Activated CD8-positive, alpha-beta T cell treated with anti-CD3 and anti-CD28 coated beads for 36 hours (primary cell): ENCODE measurements at regions of chr7 and their contacts with region 1.

Region 1: DNA sequence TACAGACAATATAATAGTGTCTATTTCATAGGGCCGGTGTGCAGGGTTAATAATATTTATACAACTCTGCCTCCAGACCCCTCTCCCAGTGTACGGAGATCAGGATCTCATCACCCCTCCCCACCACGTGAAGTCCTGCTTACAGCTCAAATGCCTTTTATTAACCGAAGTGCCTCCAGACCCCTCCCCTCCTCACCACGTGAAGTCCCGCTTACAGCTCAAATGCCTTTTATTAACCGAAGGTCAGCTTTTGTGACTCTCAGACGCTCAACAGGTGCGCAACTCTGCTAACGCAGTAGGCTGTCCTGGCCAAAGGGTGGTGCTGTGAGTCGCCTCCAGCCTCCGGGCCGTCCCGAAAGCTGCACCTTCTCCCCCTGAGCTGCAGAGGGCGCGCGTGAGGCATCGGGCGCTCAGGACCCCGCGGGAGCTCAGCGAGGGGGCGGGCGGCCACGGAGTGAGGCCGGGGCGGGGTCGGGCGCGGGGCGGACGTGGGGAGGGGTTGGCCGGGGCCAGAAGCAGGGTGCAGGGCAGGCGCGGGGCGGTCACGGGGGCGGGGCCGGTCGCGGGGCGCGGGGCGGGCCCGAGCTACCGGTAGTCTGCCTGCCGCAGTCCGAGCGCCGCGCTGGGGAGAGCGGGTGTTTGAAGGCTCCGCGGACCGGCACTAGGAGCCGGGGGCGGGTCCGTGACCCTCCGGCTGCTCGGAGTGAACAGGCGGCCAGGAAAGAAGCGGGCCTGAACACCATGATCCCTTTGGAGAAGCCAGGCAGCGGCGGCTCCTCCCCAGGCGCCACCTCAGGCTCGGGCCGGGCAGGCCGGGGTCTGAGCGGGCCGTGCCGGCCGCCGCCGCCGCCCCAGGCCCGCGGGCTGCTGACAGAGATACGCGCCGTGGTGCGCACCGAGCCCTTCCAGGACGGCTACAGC is at the start of gene STK17A:
- DNase-seq: peak; percentile 93
- ATAC-seq: peak; percentile 85
- H3K4me3 Mint-ChIP-seq: peak within 1 kb of the TSS; percentile 93
- H3K27ac Mint-ChIP-seq: peak within 1 kb of the TSS; percentile 93
- H3K4me1 Mint-ChIP-seq: peaks cover 15% of the 10 kb centered on the region
- H3K27me3 Mint-ChIP-seq: peaks cover 2% of the 10 kb centered on the region
- CTCF ChIP-seq: peak; percentile 98
- total RNA-seq, gene STK17A: 42.4 to 46.1 TPM

Region 2: GRCh38 chr7:43560742-43561360 is 21.9 kb before region 1 on chr7:
- CTCF ChIA-PET with region 1: interaction called, 11 read pairs
- POLR2A ChIA-PET with region 1: no interaction called
- intact Hi-C with region 1: no loop called
- DNase-seq: no peak
- ATAC-seq: no peak
- H3K4me3 Mint-ChIP-seq: no peak overlapping the region
- H3K27ac Mint-ChIP-seq: no peak overlapping the region
- H3K4me1 Mint-ChIP-seq: peaks cover 2% of the 10 kb centered on the region
- H3K27me3 Mint-ChIP-seq: peaks cover 7% of the 10 kb centered on the region
- CTCF ChIP-seq: no peak

Region 3: DNA sequence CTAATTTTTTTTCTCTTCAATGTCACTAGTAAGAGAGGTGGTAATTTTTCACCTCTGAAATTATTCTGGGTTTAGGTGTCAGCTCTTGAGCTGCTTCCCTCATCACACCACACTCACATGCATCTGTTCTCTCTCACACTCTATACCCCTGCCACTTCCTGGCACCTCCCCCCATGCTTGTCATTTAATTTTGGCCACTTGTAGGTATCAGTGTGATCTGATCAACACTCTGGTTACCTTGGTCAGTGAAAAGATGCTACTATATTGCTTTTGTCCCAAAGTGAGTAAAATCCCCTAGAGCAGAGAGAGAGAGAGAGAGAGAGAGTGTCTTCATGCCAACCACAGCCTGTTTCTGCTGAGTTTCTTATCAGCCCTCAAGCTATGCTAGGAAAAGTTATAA is 42.7 kb after region 1 on chr7:
- CTCF ChIA-PET with region 1: interaction called, 123 read pairs
- POLR2A ChIA-PET with region 1: interaction called, 21 read pairs
- intact Hi-C with region 1: loop called (anchors 5 kb)
- DNase-seq: peak; percentile 84
- ATAC-seq: peak; percentile 75
- H3K4me3 Mint-ChIP-seq: peak overlapping the region; percentile 17
- H3K27ac Mint-ChIP-seq: peak overlapping the region; percentile 80
- H3K4me1 Mint-ChIP-seq: peaks cover 90% of the 10 kb centered on the region
- H3K27me3 Mint-ChIP-seq: no peaks in the 10 kb centered on the region
- CTCF ChIP-seq: no peak

Region 4: DNA sequence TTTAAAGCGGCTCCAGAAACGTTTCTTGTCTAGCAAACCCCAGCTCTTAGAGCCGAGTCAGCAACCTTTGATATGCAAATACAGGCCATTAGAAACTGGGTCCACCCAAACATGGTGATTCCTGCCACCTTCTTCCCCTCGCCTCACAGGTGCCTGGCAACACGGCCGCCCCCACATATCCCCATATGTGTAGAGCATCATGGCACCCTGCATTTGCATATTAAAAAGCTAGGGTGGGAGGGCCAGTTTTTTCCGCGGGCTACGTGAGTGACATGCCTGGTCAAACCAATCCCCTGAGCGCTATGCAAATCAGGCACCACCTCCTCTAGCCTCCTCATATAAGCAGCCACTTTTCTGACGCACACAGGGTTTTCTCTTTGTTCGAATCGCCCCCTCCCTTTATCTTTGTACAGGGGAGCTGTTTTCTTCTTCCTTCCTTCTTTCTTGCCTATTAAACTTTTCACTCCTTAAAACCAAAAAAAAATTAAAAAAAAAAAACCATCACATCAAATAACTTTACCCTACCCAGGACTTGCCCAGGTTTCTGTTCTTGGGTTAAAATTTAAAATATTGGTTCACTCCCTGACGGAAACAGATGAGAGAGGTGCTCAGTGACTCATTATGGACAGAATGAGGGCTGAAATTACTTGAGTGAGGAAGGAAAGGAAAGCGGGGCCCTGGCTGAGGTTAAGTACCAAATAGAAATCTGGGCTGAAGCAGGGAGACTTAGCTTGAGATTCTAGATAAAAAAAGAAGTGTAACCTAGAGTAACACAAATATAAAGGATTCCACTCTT is 86.7 kb after region 1 on chr7:
- CTCF ChIA-PET with region 1: interaction called, 18 read pairs
- POLR2A ChIA-PET with region 1: interaction called, 4 read pairs
- intact Hi-C with region 1: no loop called
- DNase-seq: peak; percentile 95
- ATAC-seq: peak; percentile 85
- H3K4me3 Mint-ChIP-seq: peak overlapping the region; percentile 75
- H3K27ac Mint-ChIP-seq: peak overlapping the region; percentile 97
- H3K4me1 Mint-ChIP-seq: peaks cover 79% of the 10 kb centered on the region
- H3K27me3 Mint-ChIP-seq: no peaks in the 10 kb centered on the region
- CTCF ChIP-seq: no peak

Region 5: GRCh38 chr7:43700059-43700501 is 117.3 kb after region 1 on chr7:
- CTCF ChIA-PET with region 1: interaction called, 452 read pairs
- POLR2A ChIA-PET with region 1: interaction called, 63 read pairs
- intact Hi-C with region 1: loop called (anchors 1 kb)
- DNase-seq: no peak
- ATAC-seq: peak; percentile 50
- H3K4me3 Mint-ChIP-seq: no peak overlapping the region
- H3K27ac Mint-ChIP-seq: no peak overlapping the region
- H3K4me1 Mint-ChIP-seq: peaks cover 60% of the 10 kb centered on the region
- H3K27me3 Mint-ChIP-seq: no peaks in the 10 kb centered on the region
- CTCF ChIP-seq: peak; percentile 91

Region 6: GRCh38 chr7:43735802-43736541 is 153.2 kb after region 1 on chr7:
- CTCF ChIA-PET with region 1: interaction called, 52 read pairs
- POLR2A ChIA-PET with region 1: no interaction called
- intact Hi-C with region 1: no loop called
- DNase-seq: peak; percentile 80
- ATAC-seq: peak; percentile 96
- H3K4me3 Mint-ChIP-seq: no peak overlapping the region
- H3K27ac Mint-ChIP-seq: peak overlapping the region; percentile 65
- H3K4me1 Mint-ChIP-seq: peaks cover 14% of the 10 kb centered on the region
- H3K27me3 Mint-ChIP-seq: peaks cover 2% of the 10 kb centered on the region
- CTCF ChIP-seq: no peak

Region 7: DNA sequence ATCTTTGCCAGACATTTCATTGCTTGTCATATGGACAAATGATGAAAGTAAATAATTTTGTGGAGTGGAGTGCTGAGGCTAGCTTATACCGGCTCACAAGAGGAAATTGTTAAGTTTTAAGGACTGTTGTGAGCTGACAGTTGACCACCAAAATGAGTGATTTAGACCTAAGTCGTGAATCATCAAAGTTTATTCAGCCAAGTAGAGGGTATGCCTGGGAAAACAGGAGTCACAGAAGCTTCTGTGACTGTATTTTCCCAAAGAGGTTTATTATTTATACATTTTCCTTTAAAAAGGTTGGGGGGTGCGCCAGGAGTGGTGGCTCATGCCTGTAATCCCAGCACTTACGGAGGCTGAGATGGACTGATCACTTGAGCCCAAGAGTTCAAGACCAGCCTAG is 264.7 kb after region 1 on chr7:
- CTCF ChIA-PET with region 1: interaction called, 20 read pairs
- POLR2A ChIA-PET with region 1: interaction called, 3 read pairs
- intact Hi-C with region 1: no loop called
- DNase-seq: no peak
- ATAC-seq: no peak
- H3K4me3 Mint-ChIP-seq: no peak overlapping the region
- H3K27ac Mint-ChIP-seq: no peak overlapping the region
- H3K4me1 Mint-ChIP-seq: peaks cover 5% of the 10 kb centered on the region
- H3K27me3 Mint-ChIP-seq: no peaks in the 10 kb centered on the region
- CTCF ChIP-seq: no peak